Upper lobe of right lung (tissue), 1 donor: ENCODE measurements at regions of chr21 and their contacts with region 1.

Region 1: DNA sequence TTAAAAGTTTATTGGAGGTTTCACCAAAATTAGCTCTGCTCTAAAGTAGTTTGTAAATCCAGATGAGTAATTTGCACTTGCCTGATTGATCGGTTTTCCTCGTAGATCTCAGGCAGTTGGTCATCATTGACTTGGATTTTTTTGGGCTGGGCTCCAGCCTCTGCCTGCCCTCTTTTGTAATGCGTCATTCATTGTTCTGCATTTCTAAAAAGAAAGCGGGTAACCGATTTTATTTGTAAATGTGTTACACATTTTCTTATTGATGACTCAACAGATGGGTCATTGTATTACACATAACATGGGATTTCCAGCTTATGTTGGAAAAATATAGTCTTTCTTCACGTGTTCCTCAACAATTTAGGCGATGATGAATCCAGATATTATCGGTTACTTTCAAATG is 5.5 kb downstream of the ETS2 start:
- DNase-seq: no peak
- ATAC-seq: no peak
- H3K4me3 ChIP-seq: peak overlapping the region; percentile 99
- H3K27ac ChIP-seq: peak overlapping the region; percentile 97
- H3K4me1 ChIP-seq: peaks cover 55% of the 10 kb centered on the region
- H3K27me3 ChIP-seq: no peaks in the 10 kb centered on the region
- CTCF ChIP-seq: no peak

Region 2: DNA sequence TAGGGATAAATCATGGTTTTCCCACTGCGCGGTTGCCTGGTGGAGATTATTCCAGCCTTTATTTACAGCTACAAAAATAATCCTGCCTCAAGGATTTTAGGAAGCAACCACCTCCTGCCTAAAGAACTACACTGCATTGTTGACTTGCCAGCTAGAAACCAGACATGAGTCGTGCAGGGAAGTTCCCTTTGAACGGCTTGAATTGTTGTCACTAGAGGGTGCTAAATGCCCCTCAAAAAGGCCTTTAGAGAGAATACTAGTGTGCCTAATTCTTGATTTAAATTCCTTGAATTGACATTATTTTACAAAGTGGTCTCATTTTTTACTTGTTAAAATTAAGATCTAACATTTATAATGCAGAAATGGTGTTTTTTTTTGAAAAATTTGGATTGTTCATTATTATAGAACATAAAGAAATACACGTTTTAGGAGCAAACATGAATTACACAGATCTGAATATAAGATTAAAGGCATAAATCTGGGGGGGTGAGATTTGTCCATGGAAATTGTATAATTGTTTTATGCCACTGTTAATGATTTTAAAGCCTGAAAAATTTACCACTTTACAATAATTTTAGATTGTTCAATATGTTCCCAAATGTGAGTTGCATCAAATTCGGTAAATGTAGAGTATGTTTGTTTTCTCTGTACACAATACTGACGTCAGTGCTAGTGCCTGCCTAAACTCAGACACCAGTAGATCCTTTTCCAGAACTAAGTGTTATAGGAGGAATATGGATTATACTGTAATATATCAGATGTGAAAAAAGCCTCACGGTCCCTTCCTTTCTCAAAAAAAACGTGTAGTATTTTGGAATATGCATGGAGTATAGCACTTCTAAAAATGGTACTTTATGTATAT is 305.4 kb before region 1 on chr21:
- intact Hi-C with region 1: no loop called
- DNase-seq: no peak
- ATAC-seq: peak; percentile 87
- H3K4me3 ChIP-seq: peak overlapping the region; percentile 38
- H3K27ac ChIP-seq: peak overlapping the region; percentile 72
- H3K4me1 ChIP-seq: peaks cover 4% of the 10 kb centered on the region
- H3K27me3 ChIP-seq: no peaks in the 10 kb centered on the region
- CTCF ChIP-seq: peak; percentile 74

Region 3: DNA sequence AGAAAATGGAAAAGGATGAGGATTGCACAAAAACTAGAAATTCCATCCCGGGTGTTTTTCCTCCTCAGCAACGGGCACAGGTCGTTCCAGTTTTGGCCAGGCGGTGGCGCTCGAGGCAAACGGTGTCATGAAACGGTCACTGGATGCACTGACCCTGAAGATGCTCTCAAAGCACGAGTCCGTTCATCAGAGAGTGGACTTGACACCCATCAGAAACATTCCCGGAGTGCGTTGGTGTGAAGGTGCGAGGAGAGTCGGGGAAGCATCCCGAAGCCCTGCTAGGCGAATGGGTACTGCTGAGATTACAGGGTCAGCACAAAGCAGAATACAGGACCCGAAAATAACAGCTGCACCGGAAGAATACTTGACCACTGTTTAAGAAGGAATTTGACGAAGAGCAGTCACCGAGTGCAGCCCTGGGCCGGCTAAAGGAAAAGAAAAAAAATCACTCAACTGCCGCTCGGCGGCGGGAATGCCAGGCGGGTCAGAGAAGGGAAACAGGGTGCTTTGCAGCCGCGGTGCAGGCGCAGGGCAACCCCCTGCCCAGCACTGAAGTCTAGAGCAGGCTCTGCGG is 77.2 kb before region 1 on chr21:
- intact Hi-C with region 1: loop called (anchors 10 kb)
- DNase-seq: peak; percentile 93
- ATAC-seq: peak; percentile 99
- H3K4me3 ChIP-seq: peak overlapping the region; percentile 34
- H3K27ac ChIP-seq: peak overlapping the region; percentile 51
- H3K4me1 ChIP-seq: peaks cover 10% of the 10 kb centered on the region
- H3K27me3 ChIP-seq: no peaks in the 10 kb centered on the region
- CTCF ChIP-seq: peak; percentile 91

Region 4: DNA sequence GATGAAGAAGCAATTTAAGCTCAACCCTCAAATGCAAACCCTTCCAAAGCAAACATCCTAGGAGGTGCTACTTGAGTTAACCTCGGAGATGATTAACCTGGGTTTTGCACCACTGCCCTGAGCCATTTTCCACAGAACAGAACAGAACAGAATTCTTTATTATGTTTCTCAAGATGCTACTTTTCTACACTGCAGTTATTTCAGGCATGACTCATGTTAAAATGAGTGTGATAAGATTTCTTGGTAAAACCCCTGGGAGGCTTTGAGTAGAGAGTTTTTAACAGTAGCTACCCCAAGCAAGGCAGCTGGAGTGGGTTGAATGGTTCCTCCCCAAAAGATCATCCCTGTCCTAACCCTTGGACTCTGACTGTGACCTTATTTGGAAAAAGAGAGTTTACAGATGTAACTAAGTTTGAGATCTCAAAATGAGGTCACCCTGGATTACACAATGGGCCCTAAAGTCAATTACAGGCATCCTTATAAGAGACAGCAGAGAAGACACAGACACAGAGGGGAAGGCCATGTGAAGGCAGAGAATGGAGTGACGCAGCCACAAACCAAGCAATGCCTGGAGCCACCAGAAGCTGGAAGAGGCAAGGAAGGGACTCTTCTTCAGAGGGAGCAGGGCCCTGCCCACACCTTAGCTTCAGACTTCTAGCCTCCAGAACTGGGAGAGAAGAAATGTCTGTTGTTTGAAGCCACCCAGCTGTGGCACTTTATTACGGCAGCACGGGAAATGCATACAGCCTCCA is 147.9 kb after region 1 on chr21:
- intact Hi-C with region 1: no loop called
- DNase-seq: no peak
- ATAC-seq: peak; percentile 57
- H3K4me3 ChIP-seq: no peak overlapping the region
- H3K27ac ChIP-seq: peak overlapping the region; percentile 77
- H3K4me1 ChIP-seq: peaks cover 13% of the 10 kb centered on the region
- H3K27me3 ChIP-seq: no peaks in the 10 kb centered on the region
- CTCF ChIP-seq: no peak

Region 5: GRCh38 chr21:38989745-38990423 is 178.6 kb after region 1 on chr21:
- intact Hi-C with region 1: loop called (anchors 10 kb)
- DNase-seq: no peak
- ATAC-seq: peak; percentile 41
- H3K4me3 ChIP-seq: no peak overlapping the region
- H3K27ac ChIP-seq: peak overlapping the region; percentile 49
- H3K4me1 ChIP-seq: peaks cover 73% of the 10 kb centered on the region
- H3K27me3 ChIP-seq: no peaks in the 10 kb centered on the region
- CTCF ChIP-seq: no peak

Region 6: DNA sequence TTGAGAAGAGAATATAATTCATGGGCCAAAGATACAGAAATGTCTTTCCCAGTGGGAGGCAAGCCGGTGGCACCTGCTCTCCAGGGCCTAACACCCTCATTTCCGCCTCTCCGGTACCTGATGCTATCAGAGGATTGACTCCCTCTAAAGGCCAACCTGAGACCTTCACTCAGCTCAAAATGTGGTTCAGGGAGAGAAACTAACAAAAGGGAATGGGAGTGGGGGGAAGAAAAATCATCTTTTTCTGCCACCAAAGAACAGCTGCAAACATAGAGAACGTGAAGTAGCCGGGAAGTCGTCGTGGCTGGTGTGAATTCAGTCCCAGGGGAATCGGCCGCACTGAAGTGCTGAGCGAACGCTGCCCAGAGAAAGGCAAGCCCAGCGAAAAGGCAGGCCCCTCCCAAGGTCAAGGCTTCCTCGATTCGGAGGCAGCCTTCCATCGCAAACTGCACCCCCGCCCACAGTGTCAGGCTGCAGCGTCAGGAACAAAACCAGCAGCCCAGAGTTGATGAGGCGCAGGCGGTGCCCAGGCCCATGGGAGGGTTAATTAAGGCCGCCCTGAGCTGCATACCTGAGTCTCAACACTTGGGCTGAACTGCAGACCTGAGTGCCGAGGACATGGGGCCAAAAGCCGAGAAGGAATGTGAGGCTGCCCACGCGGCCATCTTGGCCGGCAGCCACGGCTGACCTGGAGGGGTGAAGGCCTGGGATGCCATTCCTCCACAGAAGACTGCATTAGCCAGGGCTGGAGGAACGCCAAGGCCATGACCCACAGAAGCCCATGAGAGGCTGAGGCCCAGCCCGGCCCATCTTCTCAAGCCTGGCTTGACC is 211.8 kb after region 1 on chr21:
- intact Hi-C with region 1: no loop called
- DNase-seq: peak; percentile 90
- ATAC-seq: peak; percentile 86
- H3K4me3 ChIP-seq: no peak overlapping the region
- H3K27ac ChIP-seq: peak overlapping the region; percentile 70
- H3K4me1 ChIP-seq: peaks cover 40% of the 10 kb centered on the region
- H3K27me3 ChIP-seq: no peaks in the 10 kb centered on the region
- CTCF ChIP-seq: peak; percentile 26

Region 7: GRCh38 chr21:39048064-39048463 is 236.8 kb after region 1 on chr21:
- intact Hi-C with region 1: no loop called
- DNase-seq: no peak
- ATAC-seq: peak; percentile 49
- H3K4me3 ChIP-seq: no peak overlapping the region
- H3K27ac ChIP-seq: no peak overlapping the region
- H3K4me1 ChIP-seq: no peaks in the 10 kb centered on the region
- H3K27me3 ChIP-seq: no peaks in the 10 kb centered on the region
- CTCF ChIP-seq: no peak

Region 8: DNA sequence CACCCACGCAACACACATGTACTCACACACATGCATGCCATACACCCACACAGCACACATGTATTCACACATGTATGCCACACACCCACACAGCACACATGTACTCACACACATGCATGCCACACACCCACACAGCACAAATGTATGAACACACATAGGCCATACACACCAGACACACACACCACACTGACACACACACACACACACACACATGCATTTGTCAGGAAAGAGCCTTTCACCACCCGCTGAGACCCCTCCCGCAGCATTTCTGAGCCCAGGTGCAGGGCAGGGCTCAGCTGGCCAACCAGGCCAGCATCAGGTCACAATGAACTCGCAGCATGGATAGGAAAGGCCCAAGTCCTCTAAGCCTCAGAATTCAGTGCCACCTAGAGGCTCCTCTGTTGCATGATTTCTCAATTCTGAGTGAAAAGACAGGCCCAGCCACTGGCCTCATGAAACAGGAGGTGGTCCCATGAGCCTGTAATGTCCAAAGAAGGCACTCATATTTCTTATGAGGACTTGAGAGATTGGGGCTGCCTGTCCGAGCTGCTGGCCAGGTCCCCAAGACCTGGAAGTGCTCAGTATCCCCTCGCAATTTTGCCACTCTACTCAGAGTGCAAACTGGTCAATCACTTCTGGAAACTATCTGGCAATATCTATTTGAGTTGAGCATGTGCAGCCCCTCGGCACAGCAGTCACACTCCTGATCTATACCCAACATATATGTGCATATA is 314.7 kb after region 1 on chr21:
- intact Hi-C with region 1: loop called (anchors 10 kb)
- DNase-seq: no peak
- ATAC-seq: peak; percentile 98
- H3K4me3 ChIP-seq: no peak overlapping the region
- H3K27ac ChIP-seq: no peak overlapping the region
- H3K4me1 ChIP-seq: no peaks in the 10 kb centered on the region
- H3K27me3 ChIP-seq: no peaks in the 10 kb centered on the region
- CTCF ChIP-seq: peak; percentile 65